Activated CD8-positive, alpha-beta T cell treated with anti-CD3 and anti-CD28 coated beads, Interleukin-2, amount 10 ng/mL, durations not matched to agents 7 days and 5 days (primary cell): ENCODE measurements at regions of chr9 and their contacts with region 1.

Region 1: GRCh38 chr9:20622330-20623020 is at the start of gene MLLT3:
- DNase-seq: peak; percentile 98
- ATAC-seq: peak; percentile 84
- H3K4me3 Mint-ChIP-seq: peak within 1 kb of the TSS; percentile 94
- H3K27ac Mint-ChIP-seq: peak within 1 kb of the TSS; percentile 94
- H3K4me1 Mint-ChIP-seq: peaks cover 39% of the 10 kb centered on the region
- H3K27me3 Mint-ChIP-seq: peaks cover under 1% of the 10 kb centered on the region
- total RNA-seq, gene MLLT3: 112 to 114 TPM

Region 2: GRCh38 chr9:20356403-20357035 is 266.0 kb before region 1 on chr9:
- CTCF ChIA-PET with region 1: interaction called, 16 read pairs
- POLR2A ChIA-PET with region 1: interaction called, 7 read pairs
- DNase-seq: peak; percentile 73
- ATAC-seq: peak; percentile 62
- H3K4me3 Mint-ChIP-seq: no peak overlapping the region
- H3K27ac Mint-ChIP-seq: peak overlapping the region; percentile 77
- H3K4me1 Mint-ChIP-seq: peaks cover 81% of the 10 kb centered on the region
- H3K27me3 Mint-ChIP-seq: no peaks in the 10 kb centered on the region

Region 3: GRCh38 chr9:20442461-20443319 is 179.8 kb before region 1 on chr9:
- CTCF ChIA-PET with region 1: no interaction called
- POLR2A ChIA-PET with region 1: no interaction called
- DNase-seq: no peak
- ATAC-seq: no peak
- H3K4me3 Mint-ChIP-seq: peak overlapping the region; percentile 32
- H3K27ac Mint-ChIP-seq: peak overlapping the region; percentile 75
- H3K4me1 Mint-ChIP-seq: peaks cover 40% of the 10 kb centered on the region
- H3K27me3 Mint-ChIP-seq: no peaks in the 10 kb centered on the region

Region 4: DNA sequence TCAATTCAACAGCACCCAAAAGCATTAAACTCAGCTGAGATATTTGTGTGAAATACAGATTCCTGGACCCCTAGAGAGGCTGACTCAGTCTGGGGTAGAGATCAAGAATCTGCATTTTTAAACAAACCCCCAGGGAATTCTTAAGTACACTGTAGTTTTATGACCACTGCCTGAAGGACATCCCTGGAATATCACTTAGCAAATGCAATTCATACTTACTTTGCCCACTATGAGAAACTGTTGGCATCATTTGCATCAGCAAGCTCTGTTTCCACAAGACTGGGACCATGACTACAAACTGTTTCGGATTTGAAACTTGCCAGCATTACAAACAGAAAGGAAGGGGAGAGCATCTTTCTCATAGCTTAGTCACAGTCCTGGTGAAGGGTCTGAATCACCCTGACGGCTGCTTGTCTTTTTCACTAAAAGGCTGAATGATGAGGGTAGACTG is 63.9 kb before region 1 on chr9:
- CTCF ChIA-PET with region 1: interaction called, 16 read pairs
- POLR2A ChIA-PET with region 1: interaction called, 15 read pairs
- DNase-seq: no peak
- ATAC-seq: peak; percentile 54
- H3K4me3 Mint-ChIP-seq: no peak overlapping the region
- H3K27ac Mint-ChIP-seq: peak overlapping the region; percentile 67
- H3K4me1 Mint-ChIP-seq: peaks cover 85% of the 10 kb centered on the region
- H3K27me3 Mint-ChIP-seq: no peaks in the 10 kb centered on the region

Region 5: DNA sequence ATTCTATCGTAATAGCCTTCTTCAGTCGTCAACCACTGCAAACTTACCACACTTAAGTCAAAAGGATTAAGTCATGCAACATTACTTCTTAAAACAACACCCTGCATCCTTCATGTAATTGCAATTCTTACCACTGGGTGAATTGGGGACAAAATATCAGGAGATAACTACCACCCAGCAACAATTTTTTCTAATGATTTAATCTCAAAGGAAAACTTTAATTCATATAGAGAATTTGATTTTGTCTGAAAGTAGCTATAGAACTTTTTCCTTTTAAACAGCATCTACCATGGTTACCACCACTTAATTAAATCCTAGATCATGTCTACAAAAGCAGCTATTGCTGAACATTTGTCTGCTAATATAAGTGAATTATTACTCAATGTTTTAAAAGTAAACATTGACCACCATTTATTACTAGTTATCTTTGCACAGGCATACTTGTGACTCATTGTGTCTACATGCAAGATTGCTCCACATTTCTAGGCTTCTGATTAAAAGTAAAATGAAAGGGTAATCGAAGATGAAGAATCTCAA is 10.7 kb before region 1 on chr9:
- CTCF ChIA-PET with region 1: interaction called, 19 read pairs
- POLR2A ChIA-PET with region 1: interaction called, 20 read pairs
- DNase-seq: no peak
- ATAC-seq: peak; percentile 42
- H3K4me3 Mint-ChIP-seq: no peak overlapping the region
- H3K27ac Mint-ChIP-seq: no peak overlapping the region
- H3K4me1 Mint-ChIP-seq: peaks cover 70% of the 10 kb centered on the region
- H3K27me3 Mint-ChIP-seq: no peaks in the 10 kb centered on the region

Region 6: DNA sequence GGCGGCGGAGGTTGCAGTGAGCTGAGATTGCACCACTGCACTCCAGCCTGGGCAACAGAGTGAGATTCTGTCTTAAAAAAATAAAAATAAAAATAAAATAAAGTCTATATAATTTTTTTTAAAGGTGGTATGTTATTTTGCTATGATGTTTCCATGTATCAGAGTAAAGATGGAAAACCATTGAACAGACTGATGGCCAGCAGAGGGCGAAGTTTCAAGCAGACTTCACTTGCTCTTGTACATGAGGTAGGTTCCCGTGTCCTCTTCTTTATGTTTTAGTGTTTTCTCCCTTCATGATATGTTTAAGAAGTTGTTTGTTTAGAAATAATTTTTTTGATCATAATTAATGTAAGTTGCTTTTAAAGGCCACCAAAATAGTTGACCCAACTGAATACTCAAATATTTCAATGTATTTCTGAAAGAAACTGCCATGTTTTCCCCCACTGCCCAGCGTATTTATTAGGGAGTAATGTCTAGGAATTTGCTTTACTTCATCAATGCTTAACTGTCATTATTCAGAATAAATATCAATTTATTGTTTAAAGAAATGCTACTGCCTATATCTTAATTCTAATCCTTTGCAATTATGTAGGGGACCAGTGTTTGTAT is 262.6 kb after region 1 on chr9:
- CTCF ChIA-PET with region 1: interaction called, 25 read pairs
- POLR2A ChIA-PET with region 1: interaction called, 3 read pairs
- DNase-seq: peak; percentile 75
- ATAC-seq: peak; percentile 47
- H3K4me3 Mint-ChIP-seq: no peak overlapping the region
- H3K27ac Mint-ChIP-seq: no peak overlapping the region
- H3K4me1 Mint-ChIP-seq: no peaks in the 10 kb centered on the region
- H3K27me3 Mint-ChIP-seq: no peaks in the 10 kb centered on the region

Region 7: GRCh38 chr9:21110708-21111576 is 488.5 kb after region 1 on chr9:
- CTCF ChIA-PET with region 1: interaction called, 13 read pairs
- POLR2A ChIA-PET with region 1: no interaction called
- DNase-seq: peak; percentile 42
- ATAC-seq: peak; percentile 87
- H3K4me3 Mint-ChIP-seq: no peak overlapping the region
- H3K27ac Mint-ChIP-seq: no peak overlapping the region
- H3K4me1 Mint-ChIP-seq: no peaks in the 10 kb centered on the region
- H3K27me3 Mint-ChIP-seq: peaks cover 19% of the 10 kb centered on the region